Endothelial cell of umbilical vein (primary cell): ENCODE measurements at regions of chr3 and their contacts with region 1.

Region 1: GRCh38 chr3:150303776-150304175 is 104.3 kb upstream of the TSC22D2 start:
- DNase-seq: no peak
- H3K4me3 ChIP-seq: no peak overlapping the region
- H3K27ac ChIP-seq: no peak overlapping the region
- H3K4me1 ChIP-seq: peaks cover 39% of the 10 kb centered on the region
- H3K27me3 ChIP-seq: no peaks in the 10 kb centered on the region
- CTCF ChIP-seq: peak; percentile 17 to 18
- POLR2A ChIP-seq: no peak

Region 2: DNA sequence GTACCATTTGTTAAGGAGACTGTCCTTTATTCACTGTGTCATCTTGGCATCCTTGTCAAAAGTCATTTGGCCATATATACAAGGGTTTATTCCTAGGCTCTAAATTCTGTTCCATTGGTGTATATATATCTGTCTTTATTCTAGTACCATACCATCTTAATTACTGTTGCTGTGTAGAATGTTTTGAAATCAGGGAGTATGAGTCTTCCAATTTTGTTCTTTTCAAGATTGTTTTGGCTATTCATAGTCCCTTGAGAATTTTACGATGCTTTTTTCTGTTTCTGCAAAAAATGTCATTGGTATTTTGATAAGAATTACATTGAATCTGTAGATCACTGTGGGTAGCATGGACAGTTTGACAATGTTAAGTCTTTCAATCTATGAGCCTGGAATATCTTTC is 361.8 kb before region 1 on chr3:
- CTCF ChIA-PET with region 1: no interaction called
- POLR2A ChIA-PET with region 1: no interaction called
- dilution Hi-C with region 1: no loop called
- intact Hi-C with region 1: no loop called
- DNase-seq: no peak
- H3K4me3 ChIP-seq: no peak overlapping the region
- H3K27ac ChIP-seq: no peak overlapping the region
- H3K4me1 ChIP-seq: peaks cover 2% of the 10 kb centered on the region
- H3K27me3 ChIP-seq: no peaks in the 10 kb centered on the region
- CTCF ChIP-seq: no peak
- POLR2A ChIP-seq: no peak

Region 3: GRCh38 chr3:150314248-150315004 is 10.7 kb after region 1 on chr3:
- CTCF ChIA-PET with region 1: interaction called, 3 read pairs
- POLR2A ChIA-PET with region 1: no interaction called
- dilution Hi-C with region 1: no loop called
- intact Hi-C with region 1: loop called (anchors 2 kb)
- DNase-seq: peak; percentile 17
- H3K4me3 ChIP-seq: no peak overlapping the region
- H3K27ac ChIP-seq: no peak overlapping the region
- H3K4me1 ChIP-seq: peaks cover 4% of the 10 kb centered on the region
- H3K27me3 ChIP-seq: no peaks in the 10 kb centered on the region
- CTCF ChIP-seq: no peak
- POLR2A ChIP-seq: no peak

Region 4: DNA sequence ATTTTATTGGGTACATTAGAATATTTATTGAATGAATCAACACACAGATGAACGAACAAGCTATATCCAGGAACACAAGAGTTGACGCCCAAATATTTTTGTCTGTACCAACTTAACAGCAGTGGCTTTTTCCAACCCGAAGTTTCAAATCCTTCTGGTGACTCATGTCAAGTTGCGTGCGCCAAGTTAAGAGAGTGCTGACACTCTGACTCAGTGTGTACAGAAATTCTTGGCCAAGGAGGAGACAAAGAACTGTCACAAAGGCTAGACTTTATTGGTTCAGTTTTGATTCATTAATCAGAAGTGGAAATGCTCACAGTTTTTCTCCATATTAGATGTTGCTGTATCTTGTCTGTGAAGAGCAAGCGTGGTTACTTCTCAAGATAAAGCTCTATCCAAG is 44.7 kb after region 1 on chr3:
- CTCF ChIA-PET with region 1: no interaction called
- POLR2A ChIA-PET with region 1: no interaction called
- dilution Hi-C with region 1: no loop called
- intact Hi-C with region 1: loop called (anchors 1 kb)
- DNase-seq: peak; percentile 81
- H3K4me3 ChIP-seq: no peak overlapping the region
- H3K27ac ChIP-seq: peak overlapping the region; percentile 67
- H3K4me1 ChIP-seq: peaks cover 30% of the 10 kb centered on the region
- H3K27me3 ChIP-seq: no peaks in the 10 kb centered on the region
- CTCF ChIP-seq: no peak
- POLR2A ChIP-seq: no peak

Region 5: GRCh38 chr3:150434234-150434633 is 130.5 kb after region 1 on chr3:
- CTCF ChIA-PET with region 1: no interaction called
- POLR2A ChIA-PET with region 1: no interaction called
- dilution Hi-C with region 1: no loop called
- intact Hi-C with region 1: no loop called
- DNase-seq: no peak
- H3K4me3 ChIP-seq: no peak overlapping the region
- H3K27ac ChIP-seq: no peak overlapping the region
- H3K4me1 ChIP-seq: peaks cover 9% of the 10 kb centered on the region
- H3K27me3 ChIP-seq: no peaks in the 10 kb centered on the region
- CTCF ChIP-seq: no peak
- POLR2A ChIP-seq: no peak